ENCODE measurements at regions of chr5 and their contacts with region 1.

Region 1: DNA sequence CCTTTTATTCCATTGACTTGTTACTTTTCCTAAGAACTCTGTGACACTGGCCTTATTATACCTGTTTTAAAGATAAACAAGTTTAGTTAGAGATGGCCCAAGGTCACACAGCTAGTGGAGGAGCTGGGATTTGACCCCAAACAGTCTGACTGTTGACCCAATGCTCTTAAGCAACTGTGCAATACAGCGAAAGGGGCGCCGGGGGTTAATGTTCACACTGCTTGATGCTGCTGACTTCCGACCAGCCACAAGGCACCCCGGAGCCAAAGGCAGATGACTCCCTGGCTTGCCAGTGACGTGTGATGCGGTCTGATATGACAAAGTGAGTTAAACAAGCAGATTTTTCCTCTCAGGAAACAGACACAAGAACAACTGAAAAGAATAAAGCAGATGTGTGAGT is 23.9 kb downstream of the PIK3R1 start:
- DNase-seq: peak; percentile 64
- H3K4me3 Mint-ChIP-seq: peak overlapping the region; percentile 15
- H3K27ac Mint-ChIP-seq: peak overlapping the region; percentile 75
- H3K4me1 Mint-ChIP-seq: peaks cover 56% of the 10 kb centered on the region
- H3K27me3 Mint-ChIP-seq: no peaks in the 10 kb centered on the region

Region 2: DNA sequence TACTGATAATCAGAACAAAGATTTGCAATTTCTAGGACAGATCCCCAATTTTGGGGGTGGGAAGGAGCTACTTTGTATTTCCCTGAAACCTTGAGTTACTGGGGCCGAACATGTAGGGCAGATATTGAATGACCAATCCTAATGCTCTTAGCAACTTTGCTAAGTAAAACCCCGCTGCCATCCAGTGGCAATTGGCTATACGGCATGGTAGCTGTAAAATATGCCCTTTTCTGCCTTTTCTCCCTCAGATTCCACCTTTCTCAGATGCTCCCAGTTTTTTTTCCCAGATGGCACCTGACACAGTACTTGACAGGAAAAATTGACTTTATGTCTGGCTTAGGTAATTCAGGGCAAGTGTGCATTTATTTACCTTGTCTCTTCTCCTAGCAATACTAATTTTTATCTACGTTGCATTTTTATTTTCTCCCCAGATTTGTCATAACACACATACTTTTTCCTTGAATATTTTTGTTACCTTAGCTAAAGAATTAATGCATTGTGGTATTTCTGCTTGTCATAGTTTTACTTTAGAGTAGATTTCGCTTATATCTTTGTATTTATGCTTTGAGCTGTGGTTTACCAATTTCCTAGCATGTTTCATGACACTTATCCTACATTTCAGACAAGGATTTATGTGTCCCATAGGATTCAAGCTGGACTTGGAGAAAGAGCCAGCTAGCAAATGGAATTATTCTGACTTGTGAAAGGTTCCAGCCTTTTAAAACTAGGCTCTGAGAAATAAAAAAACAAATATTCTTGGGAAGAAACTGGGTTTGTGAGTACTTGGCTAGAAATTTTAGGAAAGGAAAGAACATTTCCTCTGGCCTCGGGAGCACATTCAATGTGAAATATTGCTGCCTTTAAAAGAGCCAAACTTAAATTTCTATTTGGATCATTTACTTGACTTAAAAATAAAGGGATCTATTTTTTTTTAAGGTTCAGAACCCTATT is 13.5 kb after region 1 on chr5:
- intact Hi-C with region 1: loop called (anchors 2 kb)
- DNase-seq: no peak
- H3K4me3 Mint-ChIP-seq: no peak overlapping the region
- H3K27ac Mint-ChIP-seq: no peak overlapping the region
- H3K4me1 Mint-ChIP-seq: peaks cover 85% of the 10 kb centered on the region
- H3K27me3 Mint-ChIP-seq: no peaks in the 10 kb centered on the region

Region 3: DNA sequence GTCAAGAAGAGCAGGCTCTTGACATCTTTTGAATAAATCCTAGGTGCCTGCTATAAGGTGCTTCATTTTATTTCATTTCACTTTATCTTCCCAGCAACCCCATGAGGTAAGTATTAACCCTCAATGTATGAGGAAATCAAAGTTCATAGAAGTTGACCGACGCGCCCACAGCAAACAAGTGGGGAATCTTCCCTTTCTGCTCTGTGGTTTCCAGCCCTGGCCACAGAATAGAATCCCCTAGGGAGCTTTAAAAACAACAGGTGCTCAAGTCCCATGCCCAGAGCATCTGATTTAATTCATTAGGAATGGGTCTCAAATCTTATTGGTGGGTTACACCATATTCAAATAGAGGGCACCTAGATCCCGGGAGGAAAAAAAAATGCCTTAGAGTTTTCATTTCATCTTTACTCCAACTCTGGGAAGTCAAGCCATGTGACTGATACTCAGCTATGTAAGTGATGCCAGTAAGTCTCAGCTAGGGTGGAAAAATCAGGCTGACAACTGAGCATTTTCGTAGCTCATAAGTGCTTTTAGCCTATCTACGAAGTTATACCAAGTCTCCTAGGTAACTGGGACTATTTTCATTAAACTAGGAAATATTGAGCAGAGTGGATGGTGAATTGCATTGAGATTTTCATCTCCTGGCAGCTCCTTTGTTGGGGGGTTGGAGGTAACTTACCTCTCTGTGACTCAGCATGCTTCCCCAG is 500.9 kb after region 1 on chr5:
- intact Hi-C with region 1: no loop called
- DNase-seq: no peak
- H3K4me3 Mint-ChIP-seq: no peak overlapping the region
- H3K27ac Mint-ChIP-seq: no peak overlapping the region
- H3K4me1 Mint-ChIP-seq: peaks cover 9% of the 10 kb centered on the region
- H3K27me3 Mint-ChIP-seq: peaks cover 5% of the 10 kb centered on the region

Measured in activated T-helper 2 cell treated with anti-CD3 and anti-CD28 coated beads, Interferon-gamma antibody, Interleukin-2, Interleukin-4, amounts not matched to agents 10 μg/mL and 5 μg/mL and 100 μg/mL, durations not matched to agents 14 hours and 24 hours and 36 hours (primary cell).